K562 (cell line): ENCODE measurements at regions of chr2 and their contacts with region 1.

Region 1: DNA sequence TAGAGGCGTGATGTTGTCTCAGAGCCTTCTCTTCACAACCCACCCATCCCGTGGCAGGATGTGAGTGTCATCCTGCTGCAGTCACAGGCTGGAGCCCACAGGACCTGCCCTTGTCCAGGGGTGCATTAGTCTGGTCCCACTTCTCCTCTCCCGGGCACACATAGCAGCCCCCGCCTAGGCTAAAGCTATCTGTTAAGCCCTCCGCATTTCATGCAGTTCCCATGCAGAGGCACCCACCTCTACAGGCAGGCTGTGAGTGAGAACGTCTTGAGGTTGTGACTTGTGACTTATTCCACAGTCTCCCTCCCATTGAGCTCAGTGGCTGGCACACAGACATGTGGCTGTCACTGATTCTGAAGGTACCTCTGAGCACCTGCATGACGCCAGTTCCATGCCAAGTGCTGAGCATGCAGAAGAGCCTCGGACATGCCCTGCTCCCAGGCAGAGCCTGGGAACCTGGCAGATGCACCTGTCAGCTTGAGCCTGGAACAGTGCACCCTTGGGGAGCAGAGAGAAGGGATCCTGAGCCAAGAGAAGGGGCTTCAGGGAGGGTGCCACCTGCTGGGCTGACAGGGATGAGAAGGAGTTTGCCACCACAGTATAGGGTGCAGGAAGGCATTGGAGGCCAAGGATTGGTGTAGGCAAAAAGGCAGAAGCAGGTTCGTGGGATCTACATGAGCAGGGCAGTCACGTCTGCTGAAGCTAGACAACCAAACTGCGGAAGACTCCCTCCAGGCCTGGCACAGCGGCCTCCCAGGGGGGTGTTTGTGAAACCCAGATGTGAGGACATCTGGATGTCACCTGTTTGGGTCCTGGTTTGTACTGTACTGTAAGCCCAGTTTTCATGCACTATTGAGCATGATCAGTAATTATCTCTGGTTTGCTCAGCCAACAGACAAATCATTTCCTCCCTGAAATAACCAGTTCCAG is 213.6 kb downstream of the GLI2 start:
- DNase-seq: peak; percentile 19 to 38 (median 32)
- ATAC-seq: peak; percentile 70
- H3K4me3 ChIP-seq: no peak overlapping the region
- H3K27ac ChIP-seq: no peak overlapping the region
- H3K4me1 ChIP-seq: peaks cover 0 to 6% of the 10 kb centered on the region in 2 experiments; a peak in 3 of 5 replicates
- H3K27me3 ChIP-seq: peaks cover 11 to 64% of the 10 kb centered on the region in 2 experiments; a peak in 4 of 5 replicates
- CTCF ChIP-seq: peak in 2 of 3 experiments; percentile 47; a peak in 5 of 6 replicates
- EP300 ChIP-seq: no peak
- POLR2A ChIP-seq: no peak
- RAD21 ChIP-seq: peak; percentile 15 to 48; a peak in 2 of 4 replicates

Region 2: GRCh38 chr2:120914839-120915521 is 34.3 kb before region 1 on chr2:
- CTCF ChIA-PET with region 1: no interaction called
- POLR2A ChIA-PET with region 1: no interaction called
- in situ Hi-C with region 1: no loop called
- intact Hi-C with region 1: loop called (anchors 5 kb)
- DNase-seq: peak; percentile 60 to 72 (median 64)
- ATAC-seq: peak; percentile 86
- H3K4me3 ChIP-seq: no peak overlapping the region
- H3K27ac ChIP-seq: no peak overlapping the region
- H3K4me1 ChIP-seq: peaks cover 19 to 34% of the 10 kb centered on the region in 2 experiments; a peak in 4 of 5 replicates
- H3K27me3 ChIP-seq: peaks cover 3 to 38% of the 10 kb centered on the region in 2 experiments; a peak in 3 of 5 replicates
- CTCF ChIP-seq: peak; percentile 33 to 54 (median 51); a peak in 4 of 6 replicates
- EP300 ChIP-seq: no peak
- POLR2A ChIP-seq: no peak
- RAD21 ChIP-seq: peak in 1 of 2 experiments; percentile 24; a peak in 2 of 4 replicates

Region 3: DNA sequence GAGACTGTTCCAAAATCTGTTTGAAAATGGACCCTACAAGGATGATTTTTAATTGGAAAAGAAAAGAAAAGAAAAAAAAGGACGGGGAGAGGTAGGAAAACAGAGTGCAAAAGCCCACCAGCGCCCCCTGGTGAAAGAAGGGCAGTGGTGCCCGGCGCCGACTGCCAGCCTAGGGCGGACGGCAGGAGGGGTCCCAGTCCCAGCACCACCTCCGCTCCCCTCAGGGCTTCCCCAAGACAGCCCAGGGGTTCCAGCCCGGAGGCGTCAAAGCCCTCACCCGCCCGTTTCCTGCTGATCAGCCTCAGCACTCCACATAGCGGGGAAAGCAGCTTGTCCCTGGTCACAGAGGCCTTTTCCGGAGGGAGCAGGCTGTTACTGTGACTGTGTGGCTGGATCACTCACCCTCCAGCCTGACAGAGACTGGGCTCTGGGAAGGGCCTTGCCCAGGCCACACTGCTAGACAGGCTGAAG is 121.8 kb after region 1 on chr2:
- CTCF ChIA-PET with region 1: no interaction called
- POLR2A ChIA-PET with region 1: no interaction called
- in situ Hi-C with region 1: no loop called
- intact Hi-C with region 1: loop called (anchors 5 kb)
- DNase-seq: peak; percentile 62 to 81 (median 80)
- ATAC-seq: peak; percentile 64
- H3K4me3 ChIP-seq: no peak overlapping the region
- H3K27ac ChIP-seq: no peak overlapping the region
- H3K4me1 ChIP-seq: peaks cover 0 to 17% of the 10 kb centered on the region in 2 experiments; a peak in 2 of 5 replicates
- H3K27me3 ChIP-seq: peaks cover 0 to 43% of the 10 kb centered on the region in 2 experiments; a peak in 4 of 5 replicates
- CTCF ChIP-seq: peak; percentile 83 to 88 (median 87)
- EP300 ChIP-seq: no peak
- POLR2A ChIP-seq: no peak
- RAD21 ChIP-seq: peak; percentile 84 to 86